Caco-2 (cell line): ENCODE measurements at regions of chr1 and their contacts with region 1.

Region 1: DNA sequence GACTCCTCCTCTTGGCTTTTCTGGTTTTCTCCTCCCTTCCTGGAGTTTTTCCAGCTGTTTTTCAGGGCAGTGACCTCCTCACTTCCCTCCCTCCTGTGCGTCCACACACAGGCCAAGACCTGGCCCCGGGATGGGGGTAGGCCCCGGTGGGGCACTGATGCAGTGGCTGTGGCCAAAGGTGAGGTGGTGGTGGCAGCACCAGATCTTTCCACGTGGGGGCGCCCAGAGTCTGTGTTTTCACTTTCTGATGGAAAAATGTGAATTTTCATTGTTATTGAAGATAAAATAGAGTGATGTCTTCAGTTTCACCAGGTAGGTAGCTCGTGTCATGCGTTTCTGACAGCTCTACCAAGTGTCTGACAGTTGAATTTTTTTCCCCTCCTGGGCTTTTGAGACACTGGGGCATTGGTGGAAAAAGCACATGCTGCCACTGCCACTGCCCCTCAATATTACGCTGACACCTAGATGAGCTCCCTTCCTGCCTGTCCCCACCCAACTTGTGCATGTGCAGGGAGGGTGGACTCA is 39.9 kb upstream of the MAGOH start:
- DNase-seq: peak in 1 of 2 experiments; percentile 66
- H3K4me3 ChIP-seq: no peak overlapping the region
- H3K4me3 Mint-ChIP-seq: no peak overlapping the region
- H3K27ac Mint-ChIP-seq: no peak overlapping the region
- H3K4me1 ChIP-seq: no peaks in the 10 kb centered on the region
- H3K4me1 Mint-ChIP-seq: peaks cover 8% of the 10 kb centered on the region
- H3K27me3 ChIP-seq: no peaks in the 10 kb centered on the region
- H3K27me3 Mint-ChIP-seq: no peaks in the 10 kb centered on the region
- CTCF ChIP-seq: peak; percentile 64 to 71

Region 2: DNA sequence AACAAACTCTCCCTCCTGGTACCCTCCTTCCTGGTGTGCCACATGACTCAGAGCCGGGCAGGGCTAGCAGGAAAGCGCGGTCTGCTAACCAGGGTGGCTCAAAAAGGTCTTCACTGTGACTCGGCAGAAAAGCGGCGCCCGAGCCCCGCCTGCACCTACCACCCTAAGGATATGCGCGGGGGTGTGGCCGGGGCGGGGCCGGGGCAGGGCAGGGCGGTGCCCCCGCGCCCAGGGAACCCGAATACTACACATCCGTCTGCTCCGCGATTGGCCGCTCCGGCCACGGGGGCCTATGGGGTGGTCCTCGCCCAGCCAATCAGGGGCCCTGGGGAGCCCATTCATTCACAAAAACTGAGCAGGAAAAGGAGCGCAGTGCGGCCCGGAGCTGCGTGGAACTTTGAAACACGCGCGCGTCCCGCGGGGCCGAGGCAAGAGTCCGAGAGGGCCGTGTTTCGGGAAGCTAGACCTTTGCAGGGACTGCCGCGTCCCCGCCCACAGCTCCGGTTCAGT is 47.9 kb after region 1 on chr1:
- CTCF ChIA-PET with region 1: no interaction called
- POLR2A ChIA-PET with region 1: no interaction called
- intact Hi-C with region 1: loop called (anchors 1 kb)
- DNase-seq: peak; percentile 90 to 91
- H3K4me3 ChIP-seq: peak overlapping the region; percentile 66
- H3K4me3 Mint-ChIP-seq: peak overlapping the region; percentile 81
- H3K27ac Mint-ChIP-seq: peak overlapping the region; percentile 93
- H3K4me1 ChIP-seq: peaks cover 29% of the 10 kb centered on the region
- H3K4me1 Mint-ChIP-seq: peaks cover 11% of the 10 kb centered on the region
- H3K27me3 ChIP-seq: no peaks in the 10 kb centered on the region
- H3K27me3 Mint-ChIP-seq: no peaks in the 10 kb centered on the region
- CTCF ChIP-seq: no peak

Region 3: DNA sequence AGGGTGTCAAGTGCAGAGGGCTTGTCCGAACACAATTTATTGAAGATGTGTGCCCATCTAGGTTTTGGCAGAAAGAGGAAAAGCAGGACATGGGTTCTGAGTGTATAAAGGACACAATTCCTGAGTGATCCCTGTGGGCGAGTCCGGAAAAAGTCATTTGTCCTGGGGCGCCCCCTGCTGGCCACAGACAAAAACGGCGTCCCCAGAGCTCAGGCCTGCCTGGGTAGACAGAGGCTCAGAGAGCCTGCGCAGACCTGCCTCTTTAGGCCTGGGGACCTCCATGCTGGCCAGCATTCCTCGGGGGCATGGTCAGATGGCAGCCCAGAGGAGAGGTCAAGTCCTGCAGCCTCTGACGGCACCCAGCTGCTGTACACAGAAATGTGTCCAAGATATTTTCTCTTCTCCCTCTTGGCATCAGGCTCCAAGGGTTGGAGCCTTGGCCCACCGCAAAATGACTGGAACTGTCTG is 115.1 kb after region 1 on chr1:
- CTCF ChIA-PET with region 1: interaction called, 22 read pairs
- POLR2A ChIA-PET with region 1: no interaction called
- intact Hi-C with region 1: loop called (anchors 1 kb)
- DNase-seq: peak; percentile 56 to 82
- H3K4me3 ChIP-seq: no peak overlapping the region
- H3K4me3 Mint-ChIP-seq: no peak overlapping the region
- H3K27ac Mint-ChIP-seq: no peak overlapping the region
- H3K4me1 ChIP-seq: no peaks in the 10 kb centered on the region
- H3K4me1 Mint-ChIP-seq: no peaks in the 10 kb centered on the region
- H3K27me3 ChIP-seq: no peaks in the 10 kb centered on the region
- H3K27me3 Mint-ChIP-seq: peaks cover 5% of the 10 kb centered on the region
- CTCF ChIP-seq: peak; percentile 71 to 74

Region 4: GRCh38 chr1:53473463-53473862 is 195.2 kb after region 1 on chr1:
- CTCF ChIA-PET with region 1: no interaction called
- POLR2A ChIA-PET with region 1: no interaction called
- intact Hi-C with region 1: loop called (anchors 1 kb)
- DNase-seq: no peak
- H3K4me3 ChIP-seq: no peak overlapping the region
- H3K4me3 Mint-ChIP-seq: no peak overlapping the region
- H3K27ac Mint-ChIP-seq: no peak overlapping the region
- H3K4me1 ChIP-seq: no peaks in the 10 kb centered on the region
- H3K4me1 Mint-ChIP-seq: no peaks in the 10 kb centered on the region
- H3K27me3 ChIP-seq: no peaks in the 10 kb centered on the region
- H3K27me3 Mint-ChIP-seq: peaks cover 13% of the 10 kb centered on the region
- CTCF ChIP-seq: no peak